Spleen (tissue), 13 donors: ENCODE measurements at regions of chr5 and their contacts with region 1.

Region 1: GRCh38 chr5:140244525-140245025 is 58.3 kb downstream of the PFDN1 start:
- DNase-seq: peak; percentile 95
- H3K4me3 ChIP-seq: no peak overlapping the region
- H3K27ac ChIP-seq: peak overlapping the region in 2 of 8 donors; percentile 46 to 59
- H3K4me1 ChIP-seq: peaks cover 10 to 62% (median 41%) of the 10 kb centered on the region in 6 donors
- H3K27me3 ChIP-seq: peaks cover 0 to 21% (median 0%) of the 10 kb centered on the region in 7 donors
- CTCF ChIP-seq: peak; percentile 46 to 91 (median 83)
- POLR2A ChIP-seq: no peak

Region 2: DNA sequence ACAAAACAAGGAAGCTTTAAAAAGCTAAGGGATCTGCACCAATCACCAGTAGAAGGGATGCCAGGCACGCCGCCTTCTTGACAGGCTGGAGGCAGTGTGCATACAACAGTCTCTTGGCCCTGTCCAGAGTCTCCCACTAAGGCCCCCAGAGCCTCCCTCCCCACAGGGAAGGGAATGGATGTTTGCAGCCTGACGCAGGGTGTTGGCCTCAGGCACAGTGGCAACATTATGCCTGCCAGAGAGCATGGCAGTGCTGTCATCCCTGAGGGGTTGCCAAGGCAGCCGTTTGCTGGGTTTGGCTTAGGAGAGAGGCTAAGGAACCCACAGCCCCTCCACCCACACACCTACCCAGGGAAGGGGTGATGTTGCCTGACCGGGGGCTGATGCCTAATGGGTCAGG is 97.0 kb after region 1 on chr5:
- intact Hi-C with region 1: no loop called
- DNase-seq: peak; percentile 76
- H3K4me3 ChIP-seq: no peak overlapping the region
- H3K27ac ChIP-seq: peak overlapping the region; percentile 27 to 83 (median 70)
- H3K4me1 ChIP-seq: peaks cover 19 to 81% (median 56%) of the 10 kb centered on the region in 6 donors
- H3K27me3 ChIP-seq: peaks cover 0 to 10% (median 0%) of the 10 kb centered on the region in 7 donors
- CTCF ChIP-seq: no peak
- POLR2A ChIP-seq: no peak

Region 3: DNA sequence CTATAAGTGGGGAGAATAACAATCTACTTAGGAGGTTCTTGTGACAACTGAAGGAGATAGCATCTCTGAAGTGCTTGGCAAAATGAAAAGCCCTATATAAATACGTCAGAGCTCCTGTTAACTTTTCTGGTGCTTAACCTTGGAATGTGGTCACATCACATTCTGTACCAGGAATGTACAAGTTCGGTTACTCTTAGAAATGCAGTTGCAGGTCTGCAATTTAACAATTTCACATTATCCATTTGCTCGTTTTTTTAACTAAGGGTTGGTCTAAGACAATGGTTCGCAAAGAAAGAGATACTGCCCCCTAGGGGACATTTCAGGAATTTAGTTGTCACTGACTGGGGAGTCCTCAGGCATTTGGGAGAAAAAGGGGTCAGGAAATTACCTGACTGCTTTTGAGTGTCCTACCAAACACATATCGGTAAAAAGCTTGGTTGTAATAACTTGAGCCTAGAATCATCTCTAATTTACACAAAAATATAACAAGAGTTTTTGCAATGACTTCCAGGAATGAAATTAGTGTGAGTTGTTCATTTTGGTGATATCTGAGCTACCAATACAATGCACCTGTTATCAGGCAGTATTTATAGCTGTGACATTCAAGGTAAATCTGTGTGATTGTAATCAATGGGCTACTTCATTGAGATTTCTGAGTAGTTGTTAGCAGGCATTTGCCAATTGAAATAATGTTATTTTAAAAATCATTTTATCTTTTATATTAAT is 107.2 kb after region 1 on chr5:
- intact Hi-C with region 1: loop called (anchors 5 kb)
- DNase-seq: no peak
- H3K4me3 ChIP-seq: no peak overlapping the region
- H3K27ac ChIP-seq: no peak overlapping the region
- H3K4me1 ChIP-seq: peaks cover 11 to 30% (median 18%) of the 10 kb centered on the region in 6 donors
- H3K27me3 ChIP-seq: peaks cover 0 to 32% (median 0%) of the 10 kb centered on the region in 7 donors
- CTCF ChIP-seq: peak; percentile 75 to 90 (median 86)
- POLR2A ChIP-seq: no peak